Common myeloid progenitor, CD34-positive (primary cell): ENCODE measurements at regions of chrX and their contacts with region 1.

Region 1: GRCh38 chrX:132292793-132293192 is 73.5 kb upstream of the RAP2C start:
- DNase-seq: peak; percentile 46 to 76 (median 72)
- H3K4me3 ChIP-seq: peak overlapping the region in 1 of 7 experiments; percentile 28
- H3K27ac ChIP-seq: no peak overlapping the region
- H3K4me1 ChIP-seq: peaks cover 0 to 2% (median 0%) of the 10 kb centered on the region in 4 experiments
- H3K27me3 ChIP-seq: no peaks in the 10 kb centered on the region

Region 2: GRCh38 chrX:132181353-132181752 is 111.4 kb before region 1 on chrX:
- CTCF ChIA-PET with region 1: no interaction called
- POLR2A ChIA-PET with region 1: no interaction called
- DNase-seq: peak in 2 of 3 donors; percentile 16
- H3K4me3 ChIP-seq: no peak overlapping the region
- H3K27ac ChIP-seq: no peak overlapping the region
- H3K4me1 ChIP-seq: no peaks in the 10 kb centered on the region
- H3K27me3 ChIP-seq: peaks cover 0 to 6% (median 0%) of the 10 kb centered on the region in 5 experiments

Region 3: GRCh38 chrX:132592880-132593279 is 300.1 kb after region 1 on chrX:
- CTCF ChIA-PET with region 1: interaction called, 17 read pairs
- POLR2A ChIA-PET with region 1: no interaction called
- DNase-seq: peak; percentile 21 to 50 (median 38)
- H3K4me3 ChIP-seq: no peak overlapping the region
- H3K27ac ChIP-seq: no peak overlapping the region
- H3K4me1 ChIP-seq: peaks cover 0 to 5% (median 2%) of the 10 kb centered on the region in 4 experiments
- H3K27me3 ChIP-seq: peaks cover 0 to 11% (median 0%) of the 10 kb centered on the region in 5 experiments

Region 4: DNA sequence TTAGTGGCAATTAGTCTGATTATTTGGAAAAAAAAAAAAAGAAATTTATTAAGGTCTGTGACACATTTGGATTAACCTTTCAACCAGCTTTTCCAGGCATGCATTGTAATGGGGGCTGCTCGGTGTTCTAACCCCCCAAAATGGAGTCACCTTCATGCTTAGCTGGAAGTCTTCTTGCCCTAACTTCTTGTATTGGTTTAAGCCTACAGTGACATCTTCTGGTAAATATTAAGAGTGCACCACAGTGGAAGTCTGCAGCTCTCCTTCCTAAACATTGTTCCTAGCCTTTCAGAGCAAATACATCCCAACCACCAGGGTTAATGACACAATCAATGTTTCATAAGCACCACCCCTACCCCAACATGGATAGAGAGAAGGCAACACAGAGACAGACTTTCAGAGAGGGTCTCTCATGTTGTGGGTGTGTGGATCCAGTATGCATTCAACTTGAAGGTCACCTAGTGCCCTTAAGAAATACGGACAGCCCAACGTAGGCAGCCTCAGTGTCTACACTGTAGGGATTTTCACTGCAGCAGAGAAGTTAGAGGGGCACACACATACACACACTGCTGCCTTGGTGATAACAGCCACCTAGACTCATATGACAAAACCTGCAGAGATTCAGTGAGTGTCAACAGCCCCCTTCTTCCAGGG is 338.9 kb after region 1 on chrX:
- CTCF ChIA-PET with region 1: interaction called, 11 read pairs
- POLR2A ChIA-PET with region 1: no interaction called
- DNase-seq: peak; percentile 40 to 65 (median 63)
- H3K4me3 ChIP-seq: no peak overlapping the region
- H3K27ac ChIP-seq: no peak overlapping the region
- H3K4me1 ChIP-seq: no peaks in the 10 kb centered on the region
- H3K27me3 ChIP-seq: peaks cover 0 to 19% (median 0%) of the 10 kb centered on the region in 5 experiments